Activated CD4-positive, alpha-beta T cell treated with anti-CD3 and anti-CD28 coated beads, Interleukin-2, amount 10 ng/mL, durations not matched to agents 7 days and 5 days (primary cell): ENCODE measurements at regions of chr17 and their contacts with region 1.

Region 1: DNA sequence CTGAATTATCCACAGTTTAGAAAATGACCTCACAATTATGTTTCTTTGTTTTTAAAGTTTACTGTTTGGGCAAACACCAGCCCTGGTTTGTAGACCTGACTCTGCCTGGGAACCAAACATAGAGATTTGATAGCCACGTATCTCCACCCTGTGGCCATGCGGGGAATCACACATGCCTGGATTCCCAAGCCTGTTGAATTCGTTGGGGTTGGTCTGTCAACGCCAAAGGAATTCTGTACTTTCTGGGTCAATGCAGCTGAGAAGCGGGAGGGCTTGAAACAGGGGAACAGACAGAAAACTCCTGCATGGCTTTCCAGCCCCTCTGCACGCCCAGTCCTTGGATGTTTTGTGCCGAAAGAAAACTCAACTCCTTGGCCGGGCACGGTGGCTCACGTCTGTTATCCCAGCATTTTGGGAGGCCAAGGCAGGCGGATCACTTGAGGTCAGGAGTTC is 27.0 kb downstream of the CD300A start:
- DNase-seq: peak; percentile 74
- H3K4me3 Mint-ChIP-seq: no peak overlapping the region
- H3K27ac Mint-ChIP-seq: no peak overlapping the region
- H3K4me1 Mint-ChIP-seq: peaks cover 10% of the 10 kb centered on the region
- H3K27me3 Mint-ChIP-seq: peaks cover 12% of the 10 kb centered on the region

Region 2: DNA sequence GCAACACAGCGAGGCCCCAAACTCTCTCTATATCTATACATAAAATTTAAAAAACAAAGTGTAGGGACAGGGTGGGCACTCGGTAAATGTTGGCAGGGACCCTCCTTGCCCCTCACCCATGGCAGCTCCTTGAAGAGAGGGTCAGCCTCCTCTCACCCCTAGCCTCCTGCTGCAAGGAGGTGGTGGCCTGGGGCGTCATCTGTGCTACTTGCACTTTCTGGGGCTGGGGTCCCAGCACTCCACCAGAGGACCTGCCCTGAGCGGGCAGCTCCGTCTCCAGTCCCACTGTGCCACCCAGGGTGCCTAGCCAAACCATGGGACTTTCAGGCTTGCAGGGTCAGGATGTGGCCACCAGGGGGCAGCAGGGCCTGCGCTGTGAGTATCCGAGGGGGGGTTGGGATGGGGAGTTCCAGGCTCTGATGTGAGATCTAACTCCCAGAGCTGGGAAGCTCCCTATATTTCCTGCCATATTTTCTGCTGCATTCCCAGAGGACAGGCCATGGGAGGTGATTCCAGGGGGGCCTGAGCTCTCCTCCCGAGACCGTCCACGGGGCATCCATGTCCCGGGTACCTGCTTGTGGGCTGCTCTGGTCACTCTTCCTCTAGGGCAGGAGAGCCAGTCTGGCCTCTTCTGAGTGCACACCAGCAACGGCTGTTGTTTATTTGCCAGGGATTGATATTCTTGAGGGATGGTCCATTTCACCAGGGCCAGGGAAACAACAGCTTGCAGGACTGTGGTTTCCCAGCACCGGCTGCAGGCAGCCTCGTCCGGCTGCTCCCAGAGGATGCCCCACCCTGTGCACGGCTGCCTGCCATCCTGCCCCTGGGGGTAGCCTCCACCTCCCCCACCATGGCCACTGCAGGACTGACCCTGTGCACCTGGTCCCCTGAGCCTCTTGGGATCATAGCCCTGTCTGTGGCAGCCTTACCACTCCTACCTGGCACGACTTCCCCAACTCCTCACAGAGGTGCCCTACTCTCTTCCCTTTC is 125.0 kb before region 1 on chr17:
- CTCF ChIA-PET with region 1: interaction called, 10 read pairs
- POLR2A ChIA-PET with region 1: no interaction called
- DNase-seq: peak; percentile 74
- H3K4me3 Mint-ChIP-seq: no peak overlapping the region
- H3K27ac Mint-ChIP-seq: no peak overlapping the region
- H3K4me1 Mint-ChIP-seq: peaks cover 16% of the 10 kb centered on the region
- H3K27me3 Mint-ChIP-seq: peaks cover 1% of the 10 kb centered on the region

Region 3: DNA sequence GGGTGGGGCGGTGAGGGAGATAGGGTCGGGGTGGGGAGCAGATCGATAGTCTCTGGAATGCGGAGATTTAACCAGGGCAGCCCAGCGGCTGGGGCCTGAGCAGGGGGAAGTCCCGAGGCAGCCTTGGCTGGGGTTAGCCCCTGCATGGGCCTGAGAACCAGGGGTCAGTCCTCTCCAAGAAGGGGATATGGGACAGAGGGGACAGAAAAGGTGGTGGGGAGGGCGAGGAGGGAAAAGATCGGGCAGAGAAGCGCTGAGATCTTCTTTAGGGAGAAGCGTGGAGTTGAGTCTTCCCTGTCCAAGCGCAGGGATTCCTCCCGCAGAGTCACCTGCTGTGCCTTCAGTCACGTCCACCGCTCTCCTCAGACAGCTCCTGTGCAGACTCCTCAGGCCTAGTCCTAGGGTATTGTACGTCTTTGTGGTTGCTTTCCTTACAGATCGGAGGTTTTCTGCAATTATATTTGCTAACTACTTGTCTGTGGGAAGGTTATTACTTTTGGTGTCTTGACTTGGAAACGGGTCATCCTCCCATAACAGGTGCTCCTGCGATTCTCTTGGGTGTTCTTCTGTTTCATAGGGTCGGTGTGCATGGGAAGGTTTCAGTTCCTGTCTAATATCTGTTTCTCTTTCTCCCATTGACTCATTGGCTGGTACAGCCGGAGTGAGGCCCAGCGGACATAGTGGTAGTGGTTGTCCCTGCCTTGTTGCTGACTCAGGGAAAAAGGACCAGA is 26.0 kb before region 1 on chr17:
- CTCF ChIA-PET with region 1: interaction called, 10 read pairs
- POLR2A ChIA-PET with region 1: no interaction called
- DNase-seq: no peak
- H3K4me3 Mint-ChIP-seq: peak overlapping the region; percentile 67
- H3K27ac Mint-ChIP-seq: peak overlapping the region; percentile 58
- H3K4me1 Mint-ChIP-seq: peaks cover 23% of the 10 kb centered on the region
- H3K27me3 Mint-ChIP-seq: peaks cover 11% of the 10 kb centered on the region

Region 4: DNA sequence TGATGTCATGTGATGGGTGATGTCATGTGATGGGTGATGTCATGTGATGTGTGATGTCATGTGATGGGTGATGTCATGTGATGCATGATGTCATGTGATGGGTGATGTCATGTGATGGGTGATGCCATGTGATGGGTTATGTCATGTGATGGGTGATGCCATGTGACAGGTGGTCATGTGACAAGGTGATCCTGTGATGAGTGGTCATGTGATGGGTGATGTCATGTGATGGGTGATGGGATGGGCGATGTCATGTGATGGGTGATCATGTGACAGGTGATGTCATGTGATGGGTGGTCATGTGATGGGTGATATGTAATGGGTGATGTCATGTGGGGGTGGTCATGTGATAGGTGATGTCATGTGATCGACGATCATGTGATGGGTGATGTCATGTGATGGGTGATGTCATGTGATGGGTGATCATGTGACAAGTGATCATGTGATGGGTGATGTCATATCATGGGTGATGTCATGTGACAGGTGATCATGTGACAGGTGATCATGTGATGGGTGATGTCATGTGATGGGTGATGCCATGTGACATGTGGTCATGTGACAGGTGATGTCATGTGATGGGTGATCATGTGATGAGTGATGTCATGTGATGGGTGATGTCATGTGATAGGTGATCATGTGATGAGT is 20.7 kb after region 1 on chr17:
- CTCF ChIA-PET with region 1: no interaction called
- POLR2A ChIA-PET with region 1: no interaction called
- DNase-seq: peak; percentile 62
- H3K4me3 Mint-ChIP-seq: peak overlapping the region; percentile 68
- H3K27ac Mint-ChIP-seq: peak overlapping the region; percentile 94
- H3K4me1 Mint-ChIP-seq: peaks cover 9% of the 10 kb centered on the region
- H3K27me3 Mint-ChIP-seq: peaks cover 26% of the 10 kb centered on the region